ENCODE measurements at regions of chr1 and their contacts with region 1.

Region 1: DNA sequence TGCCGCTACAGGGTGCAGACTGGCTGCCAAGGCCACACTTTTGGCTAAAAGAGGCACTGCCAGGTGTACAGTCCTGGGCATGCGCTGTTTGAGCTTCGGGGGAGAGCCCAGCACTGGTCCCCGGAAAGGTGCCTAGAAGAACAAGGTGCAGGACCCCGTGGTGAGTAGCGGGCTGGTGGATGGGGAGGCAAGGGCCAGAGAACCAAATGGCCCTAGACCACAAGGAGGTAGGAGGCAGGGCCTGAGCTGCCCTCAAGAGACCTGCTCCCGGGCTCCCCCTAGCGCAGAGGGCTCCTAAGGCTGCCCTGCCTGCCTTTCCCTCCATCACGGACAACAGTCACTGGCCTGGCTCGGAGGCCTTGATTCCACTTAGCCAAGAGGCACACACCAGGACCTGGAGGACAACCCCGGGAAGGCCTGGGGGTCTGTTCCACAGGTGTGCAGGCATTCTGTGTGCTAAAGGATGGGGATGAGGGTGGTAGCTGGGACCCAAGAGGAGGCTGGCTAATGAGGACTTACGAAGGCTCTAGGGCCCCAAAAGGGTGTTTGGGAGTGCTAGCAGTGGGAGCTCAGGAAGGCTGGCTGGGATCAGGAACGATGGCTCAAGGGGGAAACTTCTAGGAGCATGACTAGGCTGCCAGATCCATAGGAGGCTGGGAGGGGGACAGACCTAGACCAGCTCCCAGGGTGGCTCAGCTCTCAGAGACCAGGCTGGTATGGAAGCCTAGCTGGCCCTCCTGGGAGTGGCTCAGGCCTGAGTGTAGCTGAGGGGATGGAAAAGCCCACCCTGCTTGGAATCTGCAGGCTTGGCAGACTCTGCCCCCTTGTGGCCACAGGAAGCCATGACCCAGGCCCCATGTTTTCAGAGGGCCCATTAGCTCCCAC is 742 bp downstream of the ARTN start:
- DNase-seq: peak; percentile 90
- CTCF ChIP-seq: peak; percentile 92

Region 2: DNA sequence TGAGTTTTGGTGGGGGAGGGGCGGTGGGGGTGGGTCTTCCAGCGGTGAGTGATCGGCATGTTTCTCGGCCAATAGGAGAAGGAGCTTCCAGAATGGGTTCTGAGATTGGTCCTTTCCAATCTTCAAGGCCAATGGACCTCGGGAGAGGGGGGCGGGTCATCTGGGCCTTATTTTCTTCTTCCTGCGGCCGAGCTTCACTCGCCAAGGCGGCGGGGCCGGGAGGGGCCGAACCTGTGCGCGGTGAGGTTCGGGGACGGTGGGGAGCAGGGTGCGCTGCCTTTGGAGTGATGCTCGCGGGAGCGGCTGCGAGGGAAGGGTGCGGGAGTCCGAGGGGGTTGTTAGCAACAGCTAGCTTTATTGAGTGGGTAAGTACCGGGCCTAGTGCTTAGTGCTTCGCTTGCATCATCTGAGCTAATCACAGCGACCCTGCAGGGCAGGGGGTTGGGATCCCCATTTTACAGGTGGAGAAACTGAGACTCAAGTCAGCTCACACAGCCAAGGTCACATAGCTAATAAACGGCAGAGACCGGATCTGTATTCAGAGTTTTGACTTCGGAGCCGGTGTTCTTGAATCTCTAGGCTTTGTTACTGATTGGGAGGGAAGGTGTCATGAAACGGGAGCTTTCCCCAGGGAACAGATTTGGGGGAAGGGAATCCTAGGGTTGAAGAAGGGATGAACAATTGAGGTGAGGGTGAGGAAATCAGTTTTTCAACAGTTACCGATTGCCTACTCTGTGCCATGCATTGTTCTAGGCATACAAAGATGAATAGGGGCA is 283.8 kb before region 1 on chr1:
- CTCF ChIA-PET with region 1: interaction called, 54 read pairs
- POLR2A ChIA-PET with region 1: interaction called, 4 read pairs
- DNase-seq: peak; percentile 100
- CTCF ChIP-seq: no peak

Region 3: GRCh38 chr1:43753422-43753821 is 180.9 kb before region 1 on chr1:
- CTCF ChIA-PET with region 1: interaction called, 25 read pairs
- POLR2A ChIA-PET with region 1: no interaction called
- DNase-seq: peak; percentile 39
- CTCF ChIP-seq: no peak

Region 4: GRCh38 chr1:43853161-43853921 is 81.0 kb before region 1 on chr1:
- CTCF ChIA-PET with region 1: interaction called, 15 read pairs
- POLR2A ChIA-PET with region 1: no interaction called
- DNase-seq: peak; percentile 40
- CTCF ChIP-seq: no peak

Region 5: GRCh38 chr1:43912607-43913006 is 21.7 kb before region 1 on chr1:
- CTCF ChIA-PET with region 1: interaction called, 30 read pairs
- POLR2A ChIA-PET with region 1: no interaction called
- DNase-seq: no peak
- CTCF ChIP-seq: no peak

Region 6: GRCh38 chr1:44036409-44037139 is 102.2 kb after region 1 on chr1:
- CTCF ChIA-PET with region 1: interaction called, 15 read pairs
- POLR2A ChIA-PET with region 1: no interaction called
- DNase-seq: peak; percentile 71
- CTCF ChIP-seq: peak; percentile 92